ENCODE measurements at regions of chr19 and their contacts with region 1.

Region 1: GRCh38 chr19:55369671-55370304 is 475 bp downstream of the IL11 start:
- DNase-seq: no peak
- H3K4me3 ChIP-seq: peak overlapping the region; percentile 74
- CTCF ChIP-seq: no peak

Region 2: GRCh38 chr19:55339048-55339888 is 30.5 kb before region 1 on chr19 and contains the start of gene KMT5C:
- CTCF ChIA-PET with region 1: interaction called, 3 read pairs
- POLR2A ChIA-PET with region 1: interaction called, 18 read pairs
- DNase-seq: peak; percentile 100
- H3K4me3 ChIP-seq: peak within 1 kb of the TSS; percentile 74
- CTCF ChIP-seq: peak; percentile 47

Region 3: DNA sequence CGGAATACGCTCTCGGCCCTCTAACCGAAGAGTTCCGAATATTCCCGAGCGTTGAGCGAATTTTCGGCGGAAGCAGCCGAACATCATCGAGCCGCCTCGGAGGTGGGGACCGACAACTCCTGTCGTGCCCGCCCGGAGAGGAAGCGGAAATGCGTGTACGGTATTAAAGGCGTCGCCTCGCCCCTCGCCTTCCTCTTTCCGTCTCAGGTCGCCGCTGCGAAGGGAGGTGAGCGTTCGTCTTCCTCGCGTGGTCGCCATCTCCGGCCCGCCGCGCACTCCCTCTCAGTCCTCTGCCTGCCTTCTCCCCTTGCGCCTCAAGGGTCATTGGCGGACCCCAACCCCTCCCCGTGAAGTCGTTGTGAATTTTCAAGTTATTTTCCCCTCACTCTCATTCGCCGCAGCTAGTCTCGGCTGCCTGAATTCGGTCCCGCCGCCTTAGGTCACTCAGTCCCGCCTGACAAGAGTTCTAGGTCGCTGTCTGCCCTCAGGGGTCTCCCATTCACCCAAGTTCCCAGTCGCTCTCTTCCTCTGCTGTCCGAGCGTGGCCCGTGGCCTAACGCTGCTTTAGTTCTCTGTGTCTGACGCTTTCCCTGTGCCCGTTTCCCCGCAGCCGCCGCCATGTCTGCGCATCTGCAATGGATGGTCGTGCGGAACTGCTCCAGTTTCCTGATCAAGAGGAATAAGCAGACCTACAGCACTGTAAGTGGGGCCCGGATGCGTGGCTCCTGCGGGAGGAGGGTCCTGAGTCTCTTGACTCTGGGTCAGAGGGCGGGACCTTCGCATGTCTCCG is 16.1 kb after region 1 on chr19 and contains the start of gene RPL28:
- CTCF ChIA-PET with region 1: interaction called, 12 read pairs
- POLR2A ChIA-PET with region 1: interaction called, 10 read pairs
- DNase-seq: peak; percentile 74
- H3K4me3 ChIP-seq: peak within 1 kb of the TSS; percentile 97
- CTCF ChIP-seq: no peak

Measured in AG04449 (cell line).